ENCODE measurements at regions of chr16 and their contacts with region 1.

Region 1: GRCh38 chr16:2474877-2475412 is at the start of gene TBC1D24:
- DNase-seq: peak; percentile 73 to 81 (median 79)
- H3K4me3 ChIP-seq: peak within 1 kb of the TSS; percentile 56 to 73 (median 64)
- H3K4me3 Mint-ChIP-seq: peak within 1 kb of the TSS; percentile 77 to 86
- H3K27ac ChIP-seq: peak within 1 kb of the TSS in 1 of 2 donors; percentile 75
- H3K27ac Mint-ChIP-seq: peak within 1 kb of the TSS in 5 of 7 donors; percentile 20 to 68 (median 46)
- H3K4me1 ChIP-seq: peaks cover 18 to 62% of the 10 kb centered on the region in 2 donors
- H3K4me1 Mint-ChIP-seq: peaks cover 36% of the 10 kb centered on the region
- H3K27me3 ChIP-seq: peaks cover 24 to 29% of the 10 kb centered on the region in 2 donors
- H3K27me3 Mint-ChIP-seq: peaks cover 26 to 34% (median 29%) of the 10 kb centered on the region in 3 donors
- CTCF ChIP-seq: no peak
- polyA plus RNA-seq, gene TBC1D24: 0.76 to 5.9 (median 2.1) TPM

Region 2: DNA sequence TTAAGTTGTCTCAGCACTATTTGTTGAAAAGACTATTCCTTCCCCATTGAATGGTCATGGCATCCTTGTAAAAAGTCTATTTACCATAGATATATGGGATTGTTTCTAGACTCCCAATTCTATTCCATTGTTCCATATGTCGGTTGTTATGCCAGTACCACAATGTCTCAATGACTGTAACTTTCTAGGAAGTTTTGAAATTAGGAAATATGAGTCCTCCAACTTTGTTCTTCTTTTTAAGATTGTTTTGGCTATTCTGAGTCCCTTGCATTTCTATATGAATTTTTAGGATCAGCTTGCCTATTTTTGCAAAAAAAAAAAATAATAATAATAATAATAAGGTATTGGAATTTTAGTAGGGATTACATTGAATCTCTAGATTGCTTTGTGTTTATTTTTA is 91.4 kb before region 1 on chr16:
- intact Hi-C with region 1: no loop called
- DNase-seq: no peak
- H3K4me3 ChIP-seq: no peak overlapping the region
- H3K4me3 Mint-ChIP-seq: no peak overlapping the region
- H3K27ac ChIP-seq: no peak overlapping the region
- H3K27ac Mint-ChIP-seq: no peak overlapping the region
- H3K4me1 ChIP-seq: no peaks in the 10 kb centered on the region
- H3K4me1 Mint-ChIP-seq: peaks cover 4% of the 10 kb centered on the region
- H3K27me3 ChIP-seq: peaks cover 0 to 3% of the 10 kb centered on the region in 2 donors
- H3K27me3 Mint-ChIP-seq: peaks cover 3 to 12% (median 11%) of the 10 kb centered on the region in 3 donors
- CTCF ChIP-seq: no peak

Region 3: DNA sequence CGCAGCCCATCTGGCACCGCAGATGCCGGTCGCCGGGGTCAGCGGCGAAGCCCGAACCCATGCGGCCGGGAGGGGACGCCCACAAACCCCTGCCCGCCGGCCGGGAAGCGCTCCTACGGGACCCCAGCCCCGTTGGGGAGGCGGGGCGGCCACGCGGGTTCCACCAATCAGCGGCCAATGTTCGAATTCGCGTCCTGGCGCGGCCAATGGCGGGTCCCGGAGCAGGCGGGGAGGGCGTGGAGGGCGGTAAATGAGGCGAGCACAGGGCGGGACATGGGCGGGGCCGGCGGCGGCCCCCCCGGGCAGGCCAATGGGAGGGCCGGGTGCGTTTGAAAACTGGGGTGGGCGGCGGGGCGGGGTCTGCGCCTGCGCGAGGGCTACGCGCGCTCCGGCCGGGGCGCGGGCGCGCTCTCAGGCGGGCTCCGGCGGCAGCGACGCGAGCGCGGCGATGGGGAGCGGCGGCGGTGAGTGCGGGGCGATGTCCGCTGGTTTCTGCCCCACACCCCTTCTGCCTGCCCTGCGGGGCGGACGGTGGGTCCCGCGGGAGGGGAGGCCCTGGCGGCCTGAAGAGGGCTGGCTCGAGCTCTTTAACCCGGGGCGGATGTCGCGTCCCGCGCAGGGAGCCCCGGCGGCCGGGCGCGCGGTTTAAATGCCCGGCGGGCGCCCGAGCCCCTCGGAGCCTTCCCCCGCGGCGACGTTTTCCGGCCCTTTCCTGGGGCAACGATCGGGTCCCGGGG is 45.7 kb before region 1 on chr16 and contains the start of gene CCNF:
- intact Hi-C with region 1: loop called in 1 of 2 experiments (anchors 10 kb)
- DNase-seq: peak; percentile 92 to 95 (median 94)
- H3K4me3 ChIP-seq: peak within 1 kb of the TSS; percentile 74 to 94 (median 92)
- H3K4me3 Mint-ChIP-seq: peak within 1 kb of the TSS; percentile 84 to 94
- H3K27ac ChIP-seq: peak within 1 kb of the TSS in 1 of 2 donors; percentile 10
- H3K27ac Mint-ChIP-seq: peak within 1 kb of the TSS in 4 of 7 donors; percentile 17 to 68 (median 32)
- H3K4me1 ChIP-seq: peaks cover 20 to 28% of the 10 kb centered on the region in 2 donors
- H3K4me1 Mint-ChIP-seq: peaks cover 31% of the 10 kb centered on the region
- H3K27me3 ChIP-seq: no peaks in the 10 kb centered on the region
- H3K27me3 Mint-ChIP-seq: peaks cover 0 to 2% (median 0%) of the 10 kb centered on the region in 3 donors
- CTCF ChIP-seq: no peak
- polyA plus RNA-seq, gene CCNF: 0.34 to 0.97 (median 0.68) TPM

Region 4: DNA sequence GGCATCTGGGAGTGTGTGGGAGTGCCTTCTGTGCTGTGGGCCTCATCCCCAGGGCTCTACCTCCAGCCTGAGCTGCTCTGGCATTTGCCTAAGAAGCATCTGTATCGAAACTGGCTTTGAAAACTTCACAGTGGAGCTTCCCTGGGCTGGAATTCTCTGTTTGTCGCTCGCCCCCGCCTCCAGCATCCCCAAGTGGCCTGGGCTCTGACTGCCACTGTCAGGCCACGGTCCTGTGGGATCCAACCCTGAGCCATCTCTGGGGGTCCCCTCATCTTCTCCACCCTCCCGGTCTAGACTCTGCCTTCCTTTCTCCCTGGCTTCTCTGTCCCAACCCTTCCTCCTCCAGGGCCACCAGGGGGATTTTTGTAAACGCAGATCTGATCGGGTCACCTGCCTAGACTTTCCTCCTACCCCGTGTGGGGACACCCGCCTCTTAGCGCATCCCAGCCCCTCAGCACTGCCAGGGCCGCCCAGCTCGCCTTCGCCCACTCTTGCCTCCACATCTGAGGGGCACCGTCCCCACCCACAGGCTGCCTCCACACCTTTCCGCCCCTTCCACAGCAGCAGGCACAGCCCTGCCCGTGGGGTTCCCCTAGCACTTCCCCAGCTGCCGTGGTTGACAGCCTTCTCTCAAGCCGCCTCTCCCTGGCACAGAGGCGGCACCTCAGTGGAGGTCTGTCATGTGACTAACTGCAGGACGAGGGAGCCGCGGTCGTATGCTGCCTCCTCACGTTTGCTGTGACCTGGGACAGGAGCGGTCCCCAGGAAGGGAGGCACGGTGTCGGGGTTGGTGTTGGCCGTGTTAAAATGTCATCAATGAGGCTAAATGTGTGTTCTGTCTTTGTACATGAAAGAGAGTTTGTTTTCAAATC is 11.9 kb after region 1 on chr16:
- intact Hi-C with region 1: loop called in 1 of 2 experiments (anchors 1 kb)
- DNase-seq: peak; percentile 79 to 88 (median 79)
- H3K4me3 ChIP-seq: peak overlapping the region in 1 of 3 experiments; percentile 10
- H3K4me3 Mint-ChIP-seq: peak overlapping the region; percentile 66 to 86
- H3K27ac ChIP-seq: peak overlapping the region; percentile 2 to 28
- H3K27ac Mint-ChIP-seq: peak overlapping the region; percentile 80 to 93 (median 90)
- H3K4me1 ChIP-seq: peaks cover 29 to 33% of the 10 kb centered on the region in 2 donors
- H3K4me1 Mint-ChIP-seq: peaks cover 44% of the 10 kb centered on the region
- H3K27me3 ChIP-seq: no peaks in the 10 kb centered on the region
- H3K27me3 Mint-ChIP-seq: peaks cover 2 to 4% (median 4%) of the 10 kb centered on the region in 3 donors
- CTCF ChIP-seq: peak; percentile 37

Region 5: GRCh38 chr16:2507052-2507659 is 32.2 kb after region 1 on chr16:
- intact Hi-C with region 1: loop called in 1 of 2 experiments (anchors 5 kb)
- DNase-seq: peak; percentile 43 to 66 (median 62)
- H3K4me3 ChIP-seq: peak overlapping the region in 2 of 3 experiments; percentile 24 to 70
- H3K4me3 Mint-ChIP-seq: peak overlapping the region; percentile 74 to 89
- H3K27ac ChIP-seq: peak overlapping the region; percentile 92 to 98
- H3K27ac Mint-ChIP-seq: peak overlapping the region; percentile 97 to 98 (median 98)
- H3K4me1 ChIP-seq: peaks cover 70 to 82% of the 10 kb centered on the region in 2 donors
- H3K4me1 Mint-ChIP-seq: peaks cover 70% of the 10 kb centered on the region
- H3K27me3 ChIP-seq: no peaks in the 10 kb centered on the region
- H3K27me3 Mint-ChIP-seq: peaks cover 1 to 3% (median 1%) of the 10 kb centered on the region in 3 donors
- CTCF ChIP-seq: no peak